Activated B cell treated with CpG ODN at 0.5 μM for 24 hours (primary cell): ENCODE measurements at regions of chr6 and their contacts with region 1.

Region 1: GRCh38 chr6:151014404-151015100 is 149.1 kb downstream of the MTHFD1L start:
- DNase-seq: peak; percentile 27
- ATAC-seq: peak; percentile 76
- H3K4me3 Mint-ChIP-seq: no peak overlapping the region
- H3K27ac Mint-ChIP-seq: no peak overlapping the region
- H3K4me1 Mint-ChIP-seq: peaks cover 3% of the 10 kb centered on the region
- H3K27me3 Mint-ChIP-seq: no peaks in the 10 kb centered on the region
- CTCF ChIP-seq: peak; percentile 56

Region 2: GRCh38 chr6:150395398-150396009 is 619.0 kb before region 1 on chr6:
- CTCF ChIA-PET with region 1: no interaction called
- POLR2A ChIA-PET with region 1: no interaction called
- intact Hi-C with region 1: no loop called
- DNase-seq: no peak
- ATAC-seq: peak; percentile 79
- H3K4me3 Mint-ChIP-seq: no peak overlapping the region
- H3K27ac Mint-ChIP-seq: no peak overlapping the region
- H3K4me1 Mint-ChIP-seq: no peaks in the 10 kb centered on the region
- H3K27me3 Mint-ChIP-seq: peaks cover 17% of the 10 kb centered on the region
- CTCF ChIP-seq: no peak

Region 3: DNA sequence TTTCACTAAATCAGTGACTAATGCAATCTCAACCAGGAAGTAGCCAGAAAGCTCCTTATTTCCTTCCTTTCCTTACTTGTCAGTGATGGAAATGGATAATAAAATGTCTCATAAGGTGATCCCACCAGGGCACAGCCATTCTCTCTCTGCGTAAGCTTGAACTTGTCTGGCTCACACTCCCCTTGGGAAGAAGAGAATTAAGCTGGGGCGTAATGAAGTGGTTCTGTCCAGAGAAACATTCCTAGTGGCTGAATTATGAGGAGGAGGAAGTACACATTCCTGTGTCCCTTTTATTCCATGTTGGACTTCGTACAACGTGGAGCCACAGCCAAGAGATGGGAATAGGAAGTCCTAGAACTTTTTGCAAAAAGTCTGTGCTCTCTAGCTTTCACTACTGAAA is 55.4 kb before region 1 on chr6:
- CTCF ChIA-PET with region 1: no interaction called
- POLR2A ChIA-PET with region 1: no interaction called
- intact Hi-C with region 1: no loop called
- DNase-seq: no peak
- ATAC-seq: no peak
- H3K4me3 Mint-ChIP-seq: no peak overlapping the region
- H3K27ac Mint-ChIP-seq: no peak overlapping the region
- H3K4me1 Mint-ChIP-seq: no peaks in the 10 kb centered on the region
- H3K27me3 Mint-ChIP-seq: no peaks in the 10 kb centered on the region
- CTCF ChIP-seq: no peak

Region 4: GRCh38 chr6:151004415-151005024 is 10.0 kb before region 1 on chr6:
- CTCF ChIA-PET with region 1: interaction called, 10 read pairs
- POLR2A ChIA-PET with region 1: no interaction called
- intact Hi-C with region 1: no loop called
- DNase-seq: no peak
- ATAC-seq: no peak
- H3K4me3 Mint-ChIP-seq: no peak overlapping the region
- H3K27ac Mint-ChIP-seq: no peak overlapping the region
- H3K4me1 Mint-ChIP-seq: peaks cover 8% of the 10 kb centered on the region
- H3K27me3 Mint-ChIP-seq: no peaks in the 10 kb centered on the region
- CTCF ChIP-seq: no peak

Region 5: GRCh38 chr6:151323791-151324487 is 309.4 kb after region 1 on chr6:
- CTCF ChIA-PET with region 1: interaction called, 113 read pairs
- POLR2A ChIA-PET with region 1: interaction called, 6 read pairs
- intact Hi-C with region 1: loop called (anchors 1 kb)
- DNase-seq: peak; percentile 61
- ATAC-seq: peak; percentile 84
- H3K4me3 Mint-ChIP-seq: peak overlapping the region; percentile 53
- H3K27ac Mint-ChIP-seq: no peak overlapping the region
- H3K4me1 Mint-ChIP-seq: peaks cover 23% of the 10 kb centered on the region
- H3K27me3 Mint-ChIP-seq: peaks cover 30% of the 10 kb centered on the region
- CTCF ChIP-seq: no peak

Region 6: DNA sequence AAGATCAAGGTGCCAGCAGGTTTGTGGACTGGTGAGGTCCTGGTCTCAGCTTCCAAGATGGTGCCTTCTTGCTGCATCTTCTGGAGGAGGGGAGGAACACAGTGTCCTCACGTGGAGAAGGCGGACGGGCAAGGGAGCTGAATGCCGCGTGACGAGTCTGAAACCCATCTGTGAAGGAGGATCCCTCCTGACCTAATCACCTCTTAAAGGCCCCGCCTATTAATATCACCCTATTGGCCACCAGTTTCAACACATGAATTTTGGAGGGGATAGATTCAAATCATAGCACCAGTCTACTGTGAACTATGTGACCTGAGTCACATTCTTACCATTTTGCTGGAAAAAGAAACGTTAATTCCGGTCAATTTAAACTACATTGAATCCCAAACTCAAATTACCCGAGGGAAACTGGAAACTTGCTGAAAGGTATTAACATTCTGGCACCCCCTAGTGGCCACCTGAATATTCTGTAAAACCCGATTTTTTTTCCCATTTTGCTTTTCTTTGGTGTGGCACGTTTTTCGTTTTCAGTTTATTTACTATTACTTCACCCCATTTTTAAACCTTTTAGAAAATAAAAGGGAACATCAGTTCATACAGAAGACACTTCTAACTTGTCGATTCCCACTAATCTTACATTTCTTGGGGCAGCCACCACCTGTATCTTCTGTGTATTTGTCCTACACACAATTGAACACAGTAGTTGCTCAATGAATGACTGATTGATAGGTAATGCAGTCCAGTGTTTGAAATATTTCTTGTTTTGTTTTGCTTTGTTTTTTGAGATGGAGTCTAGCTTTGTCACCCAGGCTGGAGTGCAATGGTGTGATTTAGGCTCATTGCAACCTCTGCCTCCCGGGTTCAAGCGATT is 461.3 kb after region 1 on chr6:
- CTCF ChIA-PET with region 1: interaction called, 5 read pairs
- POLR2A ChIA-PET with region 1: no interaction called
- intact Hi-C with region 1: loop called (anchors 1 kb)
- DNase-seq: no peak
- ATAC-seq: peak; percentile 31
- H3K4me3 Mint-ChIP-seq: peak overlapping the region; percentile 44
- H3K27ac Mint-ChIP-seq: no peak overlapping the region
- H3K4me1 Mint-ChIP-seq: peaks cover 9% of the 10 kb centered on the region
- H3K27me3 Mint-ChIP-seq: no peaks in the 10 kb centered on the region
- CTCF ChIP-seq: peak; percentile 97

Region 7: GRCh38 chr6:152267967-152268845 is 1253.7 kb after region 1 on chr6:
- CTCF ChIA-PET with region 1: no interaction called
- POLR2A ChIA-PET with region 1: no interaction called
- intact Hi-C with region 1: loop called (anchors 1 kb)
- DNase-seq: no peak
- ATAC-seq: no peak
- H3K4me3 Mint-ChIP-seq: no peak overlapping the region
- H3K27ac Mint-ChIP-seq: no peak overlapping the region
- H3K4me1 Mint-ChIP-seq: no peaks in the 10 kb centered on the region
- H3K27me3 Mint-ChIP-seq: no peaks in the 10 kb centered on the region
- CTCF ChIP-seq: no peak